Esophagus squamous epithelium (tissue), 5 donors: ENCODE measurements at regions of chr6 and their contacts with region 1.

Region 1: DNA sequence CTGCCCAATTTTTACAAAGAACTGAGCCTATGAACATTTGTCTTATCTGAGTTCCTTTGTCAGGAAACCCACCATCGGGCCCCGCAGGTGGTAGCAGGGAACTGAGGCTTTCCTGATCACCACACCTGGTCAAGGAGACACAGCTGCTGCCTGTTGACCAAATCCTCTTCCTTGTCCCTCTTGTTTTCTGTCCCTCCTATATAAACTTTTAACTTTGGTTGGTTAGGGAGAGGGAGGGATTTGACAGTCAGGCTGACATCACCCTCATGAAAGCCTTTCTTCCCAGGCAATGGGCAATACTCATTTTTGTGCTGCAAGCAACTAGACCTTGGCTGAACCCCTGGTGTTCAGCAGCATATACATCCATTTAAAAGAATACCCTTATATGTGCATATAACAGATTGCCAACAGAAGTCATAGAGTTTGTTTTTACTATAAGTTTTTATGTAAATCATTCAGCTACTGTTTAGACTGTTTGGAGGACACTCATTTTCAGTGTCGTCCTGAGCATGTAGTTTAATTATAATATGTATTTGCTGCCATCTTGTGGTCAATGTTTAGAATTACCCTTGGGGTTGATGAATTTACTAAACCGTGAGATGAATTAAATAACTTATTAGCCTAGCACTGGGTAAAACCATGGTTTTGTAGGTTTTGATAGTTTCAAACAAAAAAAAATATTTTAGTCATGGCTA is 17.0 kb downstream of the CRISP1 start:
- DNase-seq: no peak
- H3K4me3 ChIP-seq: no peak overlapping the region
- H3K27ac ChIP-seq: no peak overlapping the region
- H3K4me1 ChIP-seq: no peaks in the 10 kb centered on the region
- H3K27me3 ChIP-seq: peaks cover 0 to 3% (median 0%) of the 10 kb centered on the region in 4 donors
- CTCF ChIP-seq: peak in 5 of 6 experiments; percentile 48 to 78 (median 69)
- POLR2A ChIP-seq: no peak

Region 2: GRCh38 chr6:49625140-49625539 is 224.2 kb before region 1 on chr6:
- intact Hi-C with region 1: loop called (anchors 10 kb)
- DNase-seq: no peak
- H3K4me3 ChIP-seq: no peak overlapping the region
- H3K27ac ChIP-seq: no peak overlapping the region
- H3K4me1 ChIP-seq: peaks cover 0 to 6% (median 0%) of the 10 kb centered on the region in 3 donors
- H3K27me3 ChIP-seq: no peaks in the 10 kb centered on the region
- CTCF ChIP-seq: no peak
- POLR2A ChIP-seq: no peak